ENCODE measurements at regions of chr17 and their contacts with region 1.

Region 1: DNA sequence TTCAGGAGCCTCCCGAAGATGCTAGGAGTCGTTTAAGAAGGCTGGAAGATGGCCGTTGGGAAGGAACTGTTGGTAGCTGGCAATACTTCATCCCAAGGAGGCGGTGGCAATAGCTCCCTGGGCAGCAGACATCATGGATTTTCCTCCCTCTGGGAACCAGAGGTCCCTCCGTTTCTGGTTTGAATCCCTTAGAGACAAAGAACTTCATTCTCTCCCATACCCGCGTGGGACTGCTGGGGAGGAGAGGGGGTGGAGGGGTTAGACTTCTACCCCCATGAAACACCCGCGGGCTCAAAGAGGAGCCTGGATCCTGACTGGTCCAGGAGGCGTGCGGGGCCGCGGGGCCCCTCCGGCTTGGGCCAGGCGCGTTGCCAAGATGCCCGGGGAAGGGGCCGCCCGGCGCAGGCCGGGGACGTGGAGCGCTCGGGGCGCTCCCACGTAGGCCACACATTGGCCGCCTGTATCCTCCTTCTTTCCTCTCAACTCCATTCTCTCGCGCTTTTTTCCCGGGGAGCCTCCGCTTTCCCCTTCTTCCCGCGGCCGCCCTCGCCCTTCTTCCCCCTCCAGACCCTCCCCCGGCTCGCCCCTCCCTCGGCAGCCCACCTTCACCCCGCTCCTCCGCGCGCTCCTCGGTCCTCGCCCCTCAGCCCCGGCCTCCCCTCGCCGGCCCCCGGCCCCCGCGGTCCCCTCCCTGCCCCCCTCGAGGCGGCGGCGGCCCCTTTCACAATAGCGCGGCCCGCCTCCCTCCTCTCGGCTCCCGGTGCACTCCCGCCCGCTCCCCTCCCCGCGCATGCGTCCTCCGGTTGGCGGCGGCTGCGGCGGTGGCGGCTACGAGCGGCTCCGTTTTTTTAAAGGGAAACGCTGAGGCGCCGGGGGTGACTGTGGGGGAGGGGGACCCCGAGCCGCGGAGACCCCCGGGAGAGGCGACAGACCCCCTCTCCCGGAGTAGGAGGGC is at the start of gene MSL1:
- DNase-seq: peak; percentile 85 to 92
- H3K4me3 ChIP-seq: peak within 1 kb of the TSS; percentile 78
- H3K4me3 Mint-ChIP-seq: peak within 1 kb of the TSS; percentile 97
- H3K27ac Mint-ChIP-seq: peak within 1 kb of the TSS; percentile 62
- H3K4me1 ChIP-seq: peaks cover 26% of the 10 kb centered on the region
- H3K4me1 Mint-ChIP-seq: peaks cover 32% of the 10 kb centered on the region
- H3K27me3 ChIP-seq: no peaks in the 10 kb centered on the region
- H3K27me3 Mint-ChIP-seq: no peaks in the 10 kb centered on the region
- CTCF ChIP-seq: no peak
- total RNA-seq, gene MSL1: 82.6 and 86.9 TPM in 2 replicates

Region 2: DNA sequence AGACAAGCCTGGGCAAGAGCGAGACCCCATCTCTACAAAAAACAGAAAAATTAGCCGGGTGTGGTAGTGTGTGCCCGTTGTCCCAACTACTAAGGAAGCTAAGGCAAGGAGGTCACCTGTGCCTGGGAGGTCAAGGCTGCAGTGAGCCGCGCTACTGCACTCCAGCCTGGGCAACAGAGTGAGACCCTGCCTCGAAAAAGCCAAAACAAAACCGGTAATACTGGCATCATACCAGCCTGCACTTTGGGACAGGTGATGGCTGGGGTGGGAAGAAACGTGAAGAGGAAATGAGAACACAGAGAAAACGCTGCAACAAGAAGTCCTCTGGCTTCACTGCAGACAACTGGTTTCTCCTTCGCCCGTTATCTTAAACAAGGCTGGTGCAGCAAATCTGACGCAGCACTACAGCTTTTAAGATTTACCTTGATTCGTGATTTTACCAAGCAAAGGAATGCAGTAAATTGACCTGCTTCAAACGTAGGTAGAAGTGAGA is 18.2 kb after region 1 on chr17:
- CTCF ChIA-PET with region 1: no interaction called
- POLR2A ChIA-PET with region 1: interaction called, 11 read pairs
- intact Hi-C with region 1: no loop called
- DNase-seq: no peak
- H3K4me3 ChIP-seq: peak overlapping the region; percentile 53
- H3K4me3 Mint-ChIP-seq: peak overlapping the region; percentile 95
- H3K27ac Mint-ChIP-seq: peak overlapping the region; percentile 97
- H3K4me1 ChIP-seq: peaks cover 8% of the 10 kb centered on the region; the same call in 1 of the 2 replicates
- H3K4me1 Mint-ChIP-seq: peaks cover 9% of the 10 kb centered on the region
- H3K27me3 ChIP-seq: no peaks in the 10 kb centered on the region
- H3K27me3 Mint-ChIP-seq: no peaks in the 10 kb centered on the region
- CTCF ChIP-seq: no peak

Region 3: GRCh38 chr17:40157973-40158372 is 36.5 kb after region 1 on chr17:
- CTCF ChIA-PET with region 1: no interaction called
- POLR2A ChIA-PET with region 1: no interaction called
- intact Hi-C with region 1: loop called (anchors 1 kb)
- DNase-seq: no peak
- H3K4me3 ChIP-seq: no peak overlapping the region
- H3K4me3 Mint-ChIP-seq: no peak overlapping the region
- H3K27ac Mint-ChIP-seq: no peak overlapping the region
- H3K4me1 ChIP-seq: no peaks in the 10 kb centered on the region
- H3K4me1 Mint-ChIP-seq: peaks cover 7% of the 10 kb centered on the region
- H3K27me3 ChIP-seq: no peaks in the 10 kb centered on the region
- H3K27me3 Mint-ChIP-seq: no peaks in the 10 kb centered on the region
- CTCF ChIP-seq: no peak